ENCODE measurements at regions of chr19 and their contacts with region 1.

Region 1: GRCh38 chr19:38831142-38831605 is 420 bp downstream of the ECH1 start:
- DNase-seq: no peak
- ATAC-seq: peak; percentile 59
- H3K4me3 ChIP-seq: peak overlapping the region; percentile 51 to 78
- H3K27ac ChIP-seq: peak overlapping the region; percentile 97
- H3K4me1 ChIP-seq: peaks cover 55% of the 10 kb centered on the region
- H3K27me3 ChIP-seq: no peaks in the 10 kb centered on the region
- CTCF ChIP-seq: no peak

Region 2: GRCh38 chr19:37803250-37803854 is 1027.8 kb before region 1 on chr19:
- CTCF ChIA-PET with region 1: no interaction called
- POLR2A ChIA-PET with region 1: no interaction called
- in situ Hi-C with region 1: no loop called
- intact Hi-C with region 1: no loop called
- DNase-seq: no peak
- ATAC-seq: no peak
- H3K4me3 ChIP-seq: no peak overlapping the region
- H3K27ac ChIP-seq: no peak overlapping the region
- H3K4me1 ChIP-seq: no peaks in the 10 kb centered on the region
- H3K27me3 ChIP-seq: no peaks in the 10 kb centered on the region
- CTCF ChIP-seq: no peak

Region 3: DNA sequence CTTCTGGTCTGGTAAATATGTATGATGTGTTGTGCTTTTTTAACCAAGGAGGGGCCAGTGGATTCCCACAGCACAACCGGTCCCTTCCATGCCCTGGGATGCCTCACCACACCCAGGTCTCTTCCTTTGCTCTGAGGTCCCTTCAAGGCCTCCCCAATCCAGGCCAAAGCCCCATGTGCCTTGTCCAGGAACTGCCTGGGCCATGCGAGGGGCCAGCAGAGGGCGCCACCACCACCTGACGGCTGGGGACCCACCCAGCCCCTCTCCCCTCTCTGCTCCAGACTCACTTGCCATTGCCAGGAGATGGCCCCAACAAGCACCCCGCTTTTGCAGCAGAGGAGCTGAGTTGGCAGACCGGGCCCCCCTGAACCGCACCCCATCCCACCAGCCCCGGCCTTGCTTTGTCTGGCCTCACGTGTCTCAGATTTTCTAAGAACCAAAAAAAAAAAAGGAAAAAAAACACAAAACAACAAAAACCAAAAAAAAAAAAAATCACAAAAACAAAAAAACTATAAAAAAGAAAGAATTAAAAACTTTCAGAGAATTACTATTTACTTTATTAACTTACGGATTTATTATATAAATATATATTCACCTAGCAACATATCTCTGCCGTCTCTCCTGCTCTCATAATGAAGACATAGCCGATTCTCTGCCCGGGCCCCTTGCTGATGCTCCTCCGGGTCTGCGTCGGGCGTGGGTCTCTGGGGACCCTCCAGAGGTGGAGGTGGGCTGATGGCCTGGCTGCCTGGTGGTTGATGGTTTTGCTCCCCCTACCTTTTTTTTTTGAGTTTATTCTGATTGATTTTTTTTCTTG is 101.3 kb before region 1 on chr19:
- CTCF ChIA-PET with region 1: interaction called, 5 read pairs
- POLR2A ChIA-PET with region 1: interaction called, 4 read pairs
- in situ Hi-C with region 1: no loop called
- intact Hi-C with region 1: loop called (anchors 5 kb)
- DNase-seq: peak; percentile 61
- ATAC-seq: peak; percentile 46
- H3K4me3 ChIP-seq: no peak overlapping the region
- H3K27ac ChIP-seq: peak overlapping the region; percentile 93
- H3K4me1 ChIP-seq: peaks cover 96% of the 10 kb centered on the region
- H3K27me3 ChIP-seq: no peaks in the 10 kb centered on the region
- CTCF ChIP-seq: no peak

Region 4: GRCh38 chr19:38812841-38813320 is 18.3 kb before region 1 on chr19 and contains the start of gene LGALS4:
- CTCF ChIA-PET with region 1: no interaction called
- POLR2A ChIA-PET with region 1: interaction called, 12 read pairs
- in situ Hi-C with region 1: no loop called
- intact Hi-C with region 1: no loop called
- DNase-seq: no peak
- ATAC-seq: peak; percentile 43
- H3K4me3 ChIP-seq: no peak within 1 kb of the TSS
- H3K27ac ChIP-seq: no peak within 1 kb of the TSS; the same call in 1 of the 2 replicates
- H3K4me1 ChIP-seq: peaks cover 4% of the 10 kb centered on the region; the same call in 1 of the 2 replicates
- H3K27me3 ChIP-seq: no peaks in the 10 kb centered on the region
- CTCF ChIP-seq: no peak
- total RNA-seq, gene LGALS4: 3.9 TPM

Region 5: DNA sequence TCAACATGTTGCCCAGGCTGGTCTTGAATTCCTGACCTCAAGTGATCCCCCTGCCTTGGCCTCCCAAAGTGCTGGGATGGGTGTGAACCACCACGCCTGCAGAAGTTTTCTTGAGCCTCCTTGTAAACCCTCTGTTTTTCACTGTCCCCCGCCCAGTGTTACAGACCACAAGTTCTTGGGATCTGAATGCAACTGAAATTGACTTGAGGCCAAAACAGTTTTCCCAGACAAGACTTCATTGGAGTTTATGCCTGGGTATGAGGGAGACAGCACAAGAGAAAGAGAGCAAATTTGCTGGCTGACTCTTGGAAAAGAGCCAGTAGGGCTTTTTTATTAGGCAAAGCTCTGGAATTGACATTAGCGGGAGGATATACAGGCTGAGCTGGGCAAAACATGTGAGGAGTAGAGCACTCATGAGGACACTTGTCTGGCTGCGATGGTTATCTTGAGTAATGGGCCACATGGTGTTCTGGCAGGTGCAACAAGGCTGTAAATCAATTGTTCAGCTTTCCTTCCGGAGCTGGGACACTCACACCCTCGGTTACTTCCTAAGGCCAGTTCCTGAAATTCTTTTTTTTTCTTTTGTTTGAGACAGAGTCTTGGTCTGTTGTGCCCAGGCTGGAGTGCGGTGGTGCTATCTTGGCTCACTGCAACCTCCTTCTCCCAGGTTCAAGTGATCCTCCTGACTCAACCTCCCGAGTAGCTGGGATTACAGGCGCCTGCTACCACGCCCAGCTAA is 31.3 kb after region 1 on chr19:
- CTCF ChIA-PET with region 1: no interaction called
- POLR2A ChIA-PET with region 1: interaction called, 13 read pairs
- in situ Hi-C with region 1: no loop called
- intact Hi-C with region 1: no loop called
- DNase-seq: no peak
- ATAC-seq: peak; percentile 39
- H3K4me3 ChIP-seq: no peak overlapping the region
- H3K27ac ChIP-seq: no peak overlapping the region
- H3K4me1 ChIP-seq: peaks cover 17% of the 10 kb centered on the region
- H3K27me3 ChIP-seq: no peaks in the 10 kb centered on the region
- CTCF ChIP-seq: no peak

Region 6: GRCh38 chr19:38953677-38954076 is 122.5 kb after region 1 on chr19:
- CTCF ChIA-PET with region 1: no interaction called
- POLR2A ChIA-PET with region 1: no interaction called
- in situ Hi-C with region 1: no loop called
- intact Hi-C with region 1: no loop called
- DNase-seq: no peak
- ATAC-seq: no peak
- H3K4me3 ChIP-seq: no peak overlapping the region
- H3K27ac ChIP-seq: no peak overlapping the region
- H3K4me1 ChIP-seq: no peaks in the 10 kb centered on the region
- H3K27me3 ChIP-seq: no peaks in the 10 kb centered on the region
- CTCF ChIP-seq: no peak